Gastrocnemius medialis (tissue), 4 donors: ENCODE measurements at regions of chr19 and their contacts with region 1.

Region 1: GRCh38 chr19:37874784-37875183 is 31.6 kb downstream of the WDR87 start:
- DNase-seq: no peak
- ATAC-seq: no peak
- H3K4me3 ChIP-seq: no peak overlapping the region
- H3K27ac ChIP-seq: no peak overlapping the region
- H3K4me1 ChIP-seq: no peaks in the 10 kb centered on the region
- H3K27me3 ChIP-seq: no peaks in the 10 kb centered on the region
- CTCF ChIP-seq: no peak
- POLR2A ChIP-seq: no peak

Region 2: GRCh38 chr19:37452500-37453245 is 422.1 kb before region 1 on chr19:
- in situ Hi-C with region 1: no loop called
- intact Hi-C with region 1: no loop called
- DNase-seq: no peak
- ATAC-seq: no peak
- H3K4me3 ChIP-seq: peak overlapping the region in 1 of 4 donors; percentile 27
- H3K27ac ChIP-seq: no peak overlapping the region
- H3K4me1 ChIP-seq: no peaks in the 10 kb centered on the region
- H3K27me3 ChIP-seq: no peaks in the 10 kb centered on the region
- CTCF ChIP-seq: no peak
- POLR2A ChIP-seq: no peak

Region 3: DNA sequence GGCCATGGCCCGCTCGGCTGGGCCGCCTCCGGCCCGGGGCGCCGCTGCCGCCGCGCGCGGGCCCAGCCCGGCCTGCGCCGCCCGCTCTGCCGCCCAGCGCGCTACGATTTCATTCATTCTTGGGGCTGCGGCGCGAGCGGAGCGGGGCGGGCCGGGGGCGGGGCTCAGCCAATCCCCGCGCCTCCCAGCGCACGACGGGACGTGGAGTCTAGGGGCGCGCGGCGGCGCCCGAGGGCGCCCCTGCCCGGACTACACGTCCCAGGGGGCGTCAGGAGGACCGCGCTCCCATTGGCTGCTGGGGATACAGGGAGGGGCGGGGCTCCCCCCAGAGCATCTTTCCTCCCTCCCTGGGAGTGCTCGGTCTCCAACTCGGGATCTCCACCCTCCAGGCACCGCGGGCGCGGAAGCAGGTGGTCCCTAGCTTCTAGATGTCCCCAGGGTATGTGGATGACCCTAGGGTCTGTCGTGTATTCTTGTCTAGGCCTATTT is 354.8 kb after region 1 on chr19:
- in situ Hi-C with region 1: loop called in 1 of 4 experiments (anchors 25 kb)
- intact Hi-C with region 1: no loop called
- DNase-seq: no peak
- ATAC-seq: peak in 1 of 2 donors; percentile 27
- H3K4me3 ChIP-seq: no peak overlapping the region
- H3K27ac ChIP-seq: no peak overlapping the region
- H3K4me1 ChIP-seq: peaks cover 0 to 15% of the 10 kb centered on the region in 2 donors
- H3K27me3 ChIP-seq: peaks cover 39 to 54% (median 50%) of the 10 kb centered on the region in 3 donors
- CTCF ChIP-seq: no peak
- POLR2A ChIP-seq: no peak